Activated CD4-positive, alpha-beta T cell treated with anti-CD3 and anti-CD28 coated beads for 36 hours (primary cell): ENCODE measurements at regions of chrX and their contacts with region 1.

Region 1: GRCh38 chrX:136028251-136028984 is 43.2 kb downstream of the SLC9A6 start:
- DNase-seq: no peak
- ATAC-seq: no peak
- H3K4me3 Mint-ChIP-seq: no peak overlapping the region
- H3K27ac Mint-ChIP-seq: no peak overlapping the region
- H3K4me1 Mint-ChIP-seq: no peaks in the 10 kb centered on the region
- H3K27me3 Mint-ChIP-seq: no peaks in the 10 kb centered on the region

Region 2: GRCh38 chrX:136039968-136040367 is 11.6 kb after region 1 on chrX:
- CTCF ChIA-PET with region 1: interaction called, 10 read pairs
- POLR2A ChIA-PET with region 1: interaction called, 3 read pairs
- intact Hi-C with region 1: no loop called
- DNase-seq: no peak
- ATAC-seq: no peak
- H3K4me3 Mint-ChIP-seq: no peak overlapping the region
- H3K27ac Mint-ChIP-seq: no peak overlapping the region
- H3K4me1 Mint-ChIP-seq: no peaks in the 10 kb centered on the region
- H3K27me3 Mint-ChIP-seq: no peaks in the 10 kb centered on the region

Region 3: GRCh38 chrX:136162831-136163570 is 134.6 kb after region 1 on chrX:
- CTCF ChIA-PET with region 1: interaction called, 63 read pairs
- POLR2A ChIA-PET with region 1: interaction called, 4 read pairs
- intact Hi-C with region 1: loop called (anchors 1 to 2 kb)
- DNase-seq: peak; percentile 71
- ATAC-seq: peak; percentile 84
- H3K4me3 Mint-ChIP-seq: no peak overlapping the region
- H3K27ac Mint-ChIP-seq: no peak overlapping the region
- H3K4me1 Mint-ChIP-seq: no peaks in the 10 kb centered on the region
- H3K27me3 Mint-ChIP-seq: no peaks in the 10 kb centered on the region

Region 4: DNA sequence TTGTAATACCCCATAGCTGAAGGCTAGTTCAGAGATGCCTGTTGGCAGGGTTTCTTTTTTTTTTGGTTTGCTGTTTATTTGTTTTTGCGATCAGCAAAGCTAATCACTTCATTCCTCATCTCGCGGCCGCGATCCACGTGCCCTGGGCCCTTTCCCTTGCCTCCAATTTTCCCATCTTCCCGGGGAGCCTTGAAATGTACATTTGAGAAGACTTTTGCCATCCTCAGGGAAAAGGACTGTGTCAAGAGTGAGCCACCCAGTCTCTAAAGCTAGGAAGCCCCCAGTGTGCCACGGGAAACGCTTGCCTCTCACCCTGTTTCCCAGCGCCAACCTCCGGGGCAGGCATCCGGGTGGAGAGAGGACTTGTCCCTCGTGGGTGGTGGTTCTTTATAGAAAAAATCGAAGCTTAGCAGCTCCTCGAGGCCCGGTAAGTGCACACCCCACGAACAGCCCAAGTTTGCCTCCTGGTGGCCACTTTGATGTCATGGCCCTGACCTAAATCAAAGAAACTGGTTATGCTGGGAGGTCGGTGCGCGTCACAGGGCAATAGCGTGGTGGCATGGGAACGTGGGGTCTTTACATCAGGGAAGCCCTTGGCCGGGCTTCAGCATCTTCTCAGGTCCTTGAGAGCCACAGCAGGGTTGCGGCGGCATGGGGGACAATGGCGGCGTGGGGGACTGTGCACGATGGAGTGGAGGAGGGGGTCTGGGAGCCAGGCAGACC is 180.8 kb after region 1 on chrX:
- CTCF ChIA-PET with region 1: interaction called, 18 read pairs
- POLR2A ChIA-PET with region 1: no interaction called
- intact Hi-C with region 1: loop called (anchors 2 to 5 kb)
- DNase-seq: peak; percentile 44
- ATAC-seq: peak; percentile 55
- H3K4me3 Mint-ChIP-seq: no peak overlapping the region
- H3K27ac Mint-ChIP-seq: no peak overlapping the region
- H3K4me1 Mint-ChIP-seq: peaks cover 13% of the 10 kb centered on the region
- H3K27me3 Mint-ChIP-seq: no peaks in the 10 kb centered on the region

Region 5: DNA sequence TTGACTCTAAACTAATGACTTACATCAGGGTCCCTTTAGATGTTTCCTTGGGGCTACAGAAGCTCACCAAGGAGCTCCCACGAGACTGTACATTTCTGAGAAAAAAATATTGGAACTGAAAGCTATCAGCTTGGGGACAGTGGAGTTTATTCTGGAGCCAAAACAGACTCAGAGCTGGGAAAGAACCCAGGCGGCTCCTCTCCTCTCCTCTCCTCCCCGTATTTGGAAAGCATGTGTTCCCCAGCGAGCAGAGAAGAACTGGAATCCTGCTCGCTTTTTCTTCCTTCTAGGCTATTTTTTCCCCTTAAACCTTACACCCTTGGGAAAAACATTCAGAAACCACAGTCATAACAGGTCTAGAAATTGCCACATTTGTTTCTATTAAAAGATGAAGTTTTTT is 227.1 kb after region 1 on chrX:
- CTCF ChIA-PET with region 1: no interaction called
- POLR2A ChIA-PET with region 1: no interaction called
- intact Hi-C with region 1: no loop called
- DNase-seq: no peak
- ATAC-seq: no peak
- H3K4me3 Mint-ChIP-seq: no peak overlapping the region
- H3K27ac Mint-ChIP-seq: no peak overlapping the region
- H3K4me1 Mint-ChIP-seq: peaks cover 20% of the 10 kb centered on the region
- H3K27me3 Mint-ChIP-seq: no peaks in the 10 kb centered on the region

Region 6: DNA sequence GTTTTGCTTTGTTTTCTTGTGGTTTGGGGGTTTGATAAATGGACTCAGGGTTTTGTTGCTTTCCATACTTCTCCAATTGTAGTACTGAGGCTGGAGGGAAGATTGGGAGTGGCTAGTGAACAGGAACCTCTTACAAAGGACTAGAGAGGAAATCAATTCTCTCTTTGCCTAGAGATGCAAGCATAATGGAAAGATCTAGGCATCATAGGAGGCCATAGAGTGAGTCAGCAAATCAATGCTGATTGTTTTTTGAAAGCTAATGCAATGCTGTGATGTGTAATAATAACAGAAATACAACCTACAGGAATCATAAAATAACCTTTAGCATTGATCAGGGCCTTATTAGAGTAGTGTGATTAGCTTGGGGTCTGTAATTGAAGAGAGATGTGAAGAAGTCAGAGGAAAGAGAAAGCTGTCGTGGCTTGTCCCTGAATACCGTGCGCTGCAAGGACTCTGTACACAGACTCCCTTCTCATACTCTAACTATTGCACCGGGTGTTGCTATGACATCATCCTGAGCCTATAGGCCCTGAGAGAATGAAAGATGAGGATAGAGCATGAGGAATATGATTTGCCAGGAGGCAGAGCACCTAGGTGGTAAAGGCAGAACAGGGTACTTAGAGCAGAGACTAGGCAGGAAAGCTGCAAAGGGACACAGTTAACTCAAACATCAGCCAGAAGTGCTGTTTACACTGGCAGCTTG is 1034.6 kb after region 1 on chrX:
- CTCF ChIA-PET with region 1: no interaction called
- POLR2A ChIA-PET with region 1: no interaction called
- intact Hi-C with region 1: no loop called
- DNase-seq: no peak
- ATAC-seq: no peak
- H3K4me3 Mint-ChIP-seq: no peak overlapping the region
- H3K27ac Mint-ChIP-seq: no peak overlapping the region
- H3K4me1 Mint-ChIP-seq: no peaks in the 10 kb centered on the region
- H3K27me3 Mint-ChIP-seq: no peaks in the 10 kb centered on the region